ENCODE measurements at regions of chr14 and their contacts with region 1.

Region 1: DNA sequence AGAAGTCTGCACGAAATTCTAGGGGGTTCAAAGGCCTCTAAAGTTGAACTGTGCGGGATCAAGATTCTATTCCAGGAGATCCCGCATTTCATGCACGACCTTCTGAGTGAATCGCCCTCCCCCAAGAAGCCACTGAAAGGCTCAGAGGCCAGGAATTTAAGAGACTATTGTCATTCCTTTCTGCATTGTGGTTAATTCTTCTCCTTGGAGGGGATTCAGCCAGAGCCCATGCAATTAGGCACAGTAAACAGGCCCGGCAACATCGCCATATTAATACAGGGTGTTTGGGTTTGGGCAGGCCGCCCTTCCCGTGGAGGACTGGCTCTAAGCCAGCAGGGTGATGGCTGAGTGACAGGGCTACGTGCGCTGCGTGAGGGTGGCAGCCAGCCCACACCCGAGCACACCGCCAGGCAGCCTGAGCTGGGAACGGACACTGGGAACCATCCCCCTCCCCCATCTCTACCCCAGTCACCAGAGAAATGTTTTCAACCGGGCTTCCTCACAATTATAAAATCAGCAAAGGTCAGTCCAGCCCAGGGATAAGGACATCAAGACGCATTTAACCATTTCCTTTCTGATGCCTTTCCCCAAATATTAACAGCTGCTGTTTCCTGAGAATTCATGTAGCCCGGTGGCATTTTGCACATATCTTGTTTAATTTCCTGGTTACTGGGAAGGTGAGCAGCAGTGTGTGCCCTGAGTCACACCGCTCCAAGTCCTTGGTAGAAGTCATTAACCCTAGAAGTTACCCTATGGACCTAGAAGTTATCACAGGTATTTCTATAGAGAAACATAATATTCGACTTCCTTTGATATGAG is 12.5 kb downstream of the EGLN3 start:
- DNase-seq: peak; percentile 82 to 85
- H3K4me3 ChIP-seq: peak overlapping the region; percentile 51; the same call in 1 of the 2 replicates
- H3K27ac ChIP-seq: peak overlapping the region; percentile 85
- H3K4me1 ChIP-seq: peaks cover 45% of the 10 kb centered on the region
- H3K27me3 ChIP-seq: no peaks in the 10 kb centered on the region
- CTCF ChIP-seq: no peak

Region 2: GRCh38 chr14:33740531-33740930 is 197.8 kb before region 1 on chr14:
- CTCF ChIA-PET with region 1: no interaction called
- POLR2A ChIA-PET with region 1: no interaction called
- intact Hi-C with region 1: no loop called
- DNase-seq: no peak
- H3K4me3 ChIP-seq: no peak overlapping the region
- H3K27ac ChIP-seq: no peak overlapping the region
- H3K4me1 ChIP-seq: no peaks in the 10 kb centered on the region
- H3K27me3 ChIP-seq: no peaks in the 10 kb centered on the region
- CTCF ChIP-seq: no peak

Region 3: GRCh38 chr14:33839193-33840076 is 98.9 kb before region 1 on chr14:
- CTCF ChIA-PET with region 1: no interaction called
- POLR2A ChIA-PET with region 1: no interaction called
- intact Hi-C with region 1: no loop called
- DNase-seq: peak in 1 of 2 experiments; percentile 11
- H3K4me3 ChIP-seq: no peak overlapping the region
- H3K27ac ChIP-seq: no peak overlapping the region
- H3K4me1 ChIP-seq: peaks cover 30% of the 10 kb centered on the region
- H3K27me3 ChIP-seq: no peaks in the 10 kb centered on the region
- CTCF ChIP-seq: peak; percentile 81

Region 4: DNA sequence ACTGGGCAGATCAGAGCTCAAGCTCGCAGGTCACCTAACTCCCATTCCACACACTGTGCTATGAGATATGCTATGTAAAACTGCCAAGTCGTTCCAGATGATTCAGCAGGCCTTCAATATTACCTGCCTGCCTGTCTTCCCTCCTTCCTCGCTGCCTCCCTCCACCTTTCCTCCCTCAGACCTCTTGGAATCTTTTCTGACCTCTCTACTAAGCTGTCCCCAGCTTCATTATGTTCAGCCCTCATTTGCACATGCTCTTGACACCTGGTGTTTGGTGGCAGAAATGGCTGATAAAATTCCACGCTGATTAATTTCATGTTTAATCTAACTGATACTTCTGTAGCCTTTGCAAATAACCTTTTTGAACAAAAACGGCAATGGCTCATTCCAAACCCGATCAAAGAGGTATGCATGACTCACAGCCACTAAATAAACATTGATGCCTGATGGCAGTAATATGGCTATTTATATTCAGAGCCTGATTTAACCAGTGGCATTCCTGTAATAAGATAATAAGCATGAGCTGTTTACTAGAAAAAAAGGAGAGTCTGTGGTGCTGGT is 143.3 kb after region 1 on chr14:
- CTCF ChIA-PET with region 1: no interaction called
- POLR2A ChIA-PET with region 1: interaction called, 3 read pairs
- intact Hi-C with region 1: loop called (anchors 5 kb)
- DNase-seq: peak; percentile 49 to 91
- H3K4me3 ChIP-seq: no peak overlapping the region; the same call in 1 of the 2 replicates
- H3K27ac ChIP-seq: peak overlapping the region; percentile 85
- H3K4me1 ChIP-seq: peaks cover 64% of the 10 kb centered on the region
- H3K27me3 ChIP-seq: no peaks in the 10 kb centered on the region
- CTCF ChIP-seq: no peak

Measured in PC-9 (cell line).